ENCODE measurements at regions of chr17 and their contacts with region 1.

Region 1: GRCh38 chr17:58913585-58914444 is 158.2 kb downstream of the PPM1E start:
- DNase-seq: peak; percentile 83
- H3K4me3 Mint-ChIP-seq: no peak overlapping the region
- H3K27ac Mint-ChIP-seq: no peak overlapping the region
- H3K4me1 Mint-ChIP-seq: no peaks in the 10 kb centered on the region
- H3K27me3 Mint-ChIP-seq: no peaks in the 10 kb centered on the region
- CTCF ChIP-seq: no peak

Region 2: GRCh38 chr17:58900171-58900907 is 13.5 kb before region 1 on chr17:
- CTCF ChIA-PET with region 1: no interaction called
- POLR2A ChIA-PET with region 1: no interaction called
- intact Hi-C with region 1: no loop called
- DNase-seq: peak; percentile 66
- H3K4me3 Mint-ChIP-seq: no peak overlapping the region
- H3K27ac Mint-ChIP-seq: no peak overlapping the region
- H3K4me1 Mint-ChIP-seq: no peaks in the 10 kb centered on the region
- H3K27me3 Mint-ChIP-seq: no peaks in the 10 kb centered on the region
- CTCF ChIP-seq: no peak

Region 3: DNA sequence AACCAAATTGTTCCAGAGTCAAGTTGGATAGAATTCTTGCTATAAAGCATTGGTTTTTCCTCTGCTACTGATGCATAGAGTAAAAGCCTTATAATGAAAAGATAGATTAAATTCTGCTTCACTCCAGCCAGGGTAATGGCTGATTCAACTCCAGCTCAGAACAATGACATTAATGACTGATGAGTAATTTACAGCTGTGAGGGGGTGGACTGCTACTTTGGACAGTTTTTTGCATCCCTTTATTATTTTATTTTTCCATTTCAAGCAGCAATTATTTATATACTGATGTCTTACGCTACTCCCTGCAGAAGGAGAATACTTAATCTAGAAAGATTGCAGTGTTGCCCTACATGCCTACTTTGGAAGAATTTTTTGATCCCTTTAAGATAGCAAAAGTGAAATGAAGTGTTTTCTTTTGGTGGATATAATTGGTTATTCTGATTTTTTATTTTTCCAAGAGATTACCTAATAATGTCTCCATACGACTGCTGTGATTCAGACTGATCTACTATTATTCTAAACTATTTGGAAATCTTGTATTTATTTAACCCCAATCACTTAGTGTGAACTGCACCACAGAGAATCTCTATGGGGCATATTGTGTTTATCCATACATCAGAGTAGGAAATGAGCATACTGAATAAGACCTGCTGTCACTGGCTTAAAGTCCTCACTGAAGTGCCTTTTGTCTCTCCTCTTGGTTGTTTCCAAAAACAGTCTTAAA is 43.3 kb after region 1 on chr17:
- CTCF ChIA-PET with region 1: interaction called, 4 read pairs
- POLR2A ChIA-PET with region 1: no interaction called
- intact Hi-C with region 1: loop called (anchors 5 kb)
- DNase-seq: peak; percentile 67
- H3K4me3 Mint-ChIP-seq: no peak overlapping the region
- H3K27ac Mint-ChIP-seq: peak overlapping the region; percentile 27
- H3K4me1 Mint-ChIP-seq: peaks cover 6% of the 10 kb centered on the region
- H3K27me3 Mint-ChIP-seq: no peaks in the 10 kb centered on the region
- CTCF ChIP-seq: no peak

Measured in MCF 10A (cell line).